CD4-positive, alpha-beta T cell (primary cell): ENCODE measurements at regions of chr9 and their contacts with region 1.

Region 1: DNA sequence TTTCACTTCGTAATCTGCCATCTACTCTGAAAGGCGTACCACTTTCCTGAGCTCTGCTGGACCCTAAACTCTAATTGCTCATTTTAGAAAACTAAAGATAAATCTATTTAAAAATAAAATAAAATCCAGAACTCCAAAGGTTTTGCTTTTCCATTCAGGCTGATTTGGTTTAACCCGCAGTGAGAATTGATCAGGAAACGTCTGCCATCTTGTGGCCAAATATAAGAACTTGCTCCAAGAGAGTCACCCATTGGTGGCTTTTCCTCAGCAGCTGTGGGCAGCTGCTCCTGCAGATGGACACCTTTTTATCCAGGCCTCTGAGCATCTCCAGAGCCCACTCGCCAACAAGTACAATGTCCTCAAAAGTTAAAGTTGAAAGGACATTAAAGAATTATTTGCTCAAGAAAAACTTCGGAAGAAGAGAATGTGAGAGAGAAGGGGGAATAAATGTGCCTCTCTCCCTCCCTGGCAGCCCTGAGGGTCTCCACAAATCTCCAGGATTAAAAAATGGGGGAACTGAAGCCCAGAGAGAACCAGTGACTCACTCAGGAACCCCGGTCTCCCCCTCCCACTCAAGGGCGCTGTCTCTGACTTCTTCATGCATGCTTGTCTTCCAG is 4.1 kb downstream of the SAXO1 start:
- DNase-seq: peak in 4 of 14 experiments; percentile 33 to 62 (median 50)
- ATAC-seq: no peak
- H3K4me3 ChIP-seq: no peak overlapping the region
- H3K4me3 Mint-ChIP-seq: no peak overlapping the region
- H3K27ac ChIP-seq: no peak overlapping the region
- H3K27ac Mint-ChIP-seq: no peak overlapping the region
- H3K4me1 ChIP-seq: no peaks in the 10 kb centered on the region
- H3K4me1 Mint-ChIP-seq: no peaks in the 10 kb centered on the region
- H3K27me3 ChIP-seq: peaks cover 0 to 6% of the 10 kb centered on the region in 2 experiments
- H3K27me3 Mint-ChIP-seq: peaks cover 10% of the 10 kb centered on the region
- CTCF ChIP-seq: peak; percentile 75

Region 2: DNA sequence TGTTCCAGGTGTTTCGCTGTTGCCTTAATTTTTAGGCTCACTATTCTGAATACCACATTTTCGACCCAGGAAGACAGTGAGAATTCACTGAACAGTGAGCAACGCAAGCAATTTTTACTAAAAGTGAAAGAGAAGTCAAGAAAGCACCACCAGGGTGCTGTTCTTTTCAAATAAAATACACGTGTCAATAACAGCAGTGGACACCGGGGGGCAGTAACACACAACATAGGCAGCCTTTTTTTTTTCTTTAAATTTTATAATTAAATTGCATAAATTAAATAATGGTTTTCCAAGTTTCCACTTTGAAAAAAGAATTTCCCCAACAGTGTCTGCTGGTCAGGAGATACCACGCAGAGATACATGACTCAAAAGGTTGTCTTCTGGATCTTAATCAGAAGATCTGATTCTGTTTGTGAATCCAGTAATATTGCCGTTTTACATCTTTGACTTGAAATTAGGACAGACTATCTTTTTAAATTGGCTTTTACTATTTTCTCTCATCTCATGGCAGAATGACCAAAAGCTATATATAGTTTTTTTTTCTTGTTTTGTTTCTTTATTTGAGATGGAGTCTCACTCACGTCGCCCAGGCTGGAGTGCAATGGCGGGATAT is 1497.2 kb before region 1 on chr9:
- CTCF ChIA-PET with region 1: no interaction called
- POLR2A ChIA-PET with region 1: no interaction called
- intact Hi-C with region 1: loop called in 1 of 2 experiments (anchors 10 kb)
- DNase-seq: no peak
- ATAC-seq: no peak
- H3K4me3 ChIP-seq: no peak overlapping the region
- H3K4me3 Mint-ChIP-seq: no peak overlapping the region
- H3K27ac ChIP-seq: no peak overlapping the region
- H3K27ac Mint-ChIP-seq: no peak overlapping the region
- H3K4me1 ChIP-seq: no peaks in the 10 kb centered on the region
- H3K4me1 Mint-ChIP-seq: no peaks in the 10 kb centered on the region
- H3K27me3 ChIP-seq: no peaks in the 10 kb centered on the region
- H3K27me3 Mint-ChIP-seq: no peaks in the 10 kb centered on the region
- CTCF ChIP-seq: no peak

Region 3: DNA sequence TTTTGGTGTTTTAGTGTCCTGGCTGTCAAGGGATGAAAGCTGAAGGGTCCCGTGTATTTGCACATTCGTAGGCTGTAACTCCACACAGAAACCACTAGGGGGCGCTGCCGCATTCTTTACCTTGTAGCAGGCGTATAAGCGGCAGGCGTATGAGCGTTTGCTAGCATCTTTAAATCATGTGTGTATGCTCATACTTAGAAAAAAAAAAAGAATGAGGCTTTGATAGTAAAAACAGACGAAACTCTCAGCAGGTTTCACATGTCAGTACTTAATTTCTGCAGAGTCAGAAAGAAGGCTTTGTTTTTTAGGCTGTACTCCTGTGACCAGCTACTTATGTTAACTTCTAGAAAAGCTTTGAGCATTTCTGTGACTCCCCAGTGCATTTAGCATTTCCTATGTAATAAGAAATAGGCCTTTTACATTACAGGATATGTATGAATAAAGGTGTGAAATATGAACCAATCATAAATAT is 773.7 kb before region 1 on chr9:
- CTCF ChIA-PET with region 1: interaction called, 4 read pairs
- POLR2A ChIA-PET with region 1: no interaction called
- intact Hi-C with region 1: loop called (anchors 2 kb)
- DNase-seq: peak; percentile 41 to 81 (median 58)
- ATAC-seq: peak; percentile 69
- H3K4me3 ChIP-seq: no peak overlapping the region
- H3K4me3 Mint-ChIP-seq: no peak overlapping the region
- H3K27ac ChIP-seq: no peak overlapping the region
- H3K27ac Mint-ChIP-seq: no peak overlapping the region
- H3K4me1 ChIP-seq: no peaks in the 10 kb centered on the region
- H3K4me1 Mint-ChIP-seq: peaks cover 7% of the 10 kb centered on the region
- H3K27me3 ChIP-seq: peaks cover 0 to 3% of the 10 kb centered on the region in 2 experiments
- H3K27me3 Mint-ChIP-seq: peaks cover 27% of the 10 kb centered on the region
- CTCF ChIP-seq: peak; percentile 99

Region 4: DNA sequence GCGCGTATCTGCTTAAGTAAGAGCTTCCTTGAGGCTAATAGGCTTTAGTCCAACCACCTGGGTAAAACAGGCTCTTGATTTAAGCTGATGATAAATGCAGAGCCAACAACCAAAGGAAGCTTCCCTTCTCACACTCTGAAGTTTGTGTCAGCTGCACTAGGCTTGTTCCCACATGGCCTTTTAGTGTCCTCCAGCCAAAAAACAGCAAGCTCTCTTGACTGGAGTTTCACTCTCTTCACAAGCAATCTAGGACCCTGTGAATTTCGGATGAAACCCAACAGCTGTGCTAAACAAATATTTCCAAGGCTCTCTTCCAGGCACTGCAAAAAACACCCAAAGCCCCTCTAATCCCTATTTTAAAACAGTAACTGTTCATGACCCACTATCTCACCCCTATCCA is 59.8 kb before region 1 on chr9:
- CTCF ChIA-PET with region 1: no interaction called
- POLR2A ChIA-PET with region 1: no interaction called
- intact Hi-C with region 1: no loop called
- DNase-seq: no peak
- ATAC-seq: no peak
- H3K4me3 ChIP-seq: no peak overlapping the region
- H3K4me3 Mint-ChIP-seq: no peak overlapping the region
- H3K27ac ChIP-seq: no peak overlapping the region
- H3K27ac Mint-ChIP-seq: no peak overlapping the region
- H3K4me1 ChIP-seq: no peaks in the 10 kb centered on the region
- H3K4me1 Mint-ChIP-seq: no peaks in the 10 kb centered on the region
- H3K27me3 ChIP-seq: peaks cover 4 to 9% of the 10 kb centered on the region in 2 experiments
- H3K27me3 Mint-ChIP-seq: peaks cover 54% of the 10 kb centered on the region
- CTCF ChIP-seq: no peak

Region 5: DNA sequence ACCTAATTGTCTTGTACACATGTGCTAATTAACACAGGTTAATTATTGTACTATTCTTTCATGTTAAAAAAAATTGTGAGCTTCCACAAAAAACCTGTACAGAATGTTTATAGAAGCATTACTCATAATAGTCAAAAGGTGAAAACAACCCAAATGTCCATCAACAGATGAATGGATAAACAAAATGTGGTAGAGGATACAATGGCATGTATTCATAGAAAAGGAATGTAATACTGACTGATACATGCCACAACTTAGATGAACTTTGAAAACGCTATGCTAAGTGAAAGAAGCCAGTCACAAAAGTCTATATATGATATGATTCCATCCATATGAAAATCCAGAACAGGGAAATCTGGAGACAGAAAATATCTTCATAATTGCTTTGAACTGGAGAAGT is 45.9 kb after region 1 on chr9:
- CTCF ChIA-PET with region 1: no interaction called
- POLR2A ChIA-PET with region 1: no interaction called
- intact Hi-C with region 1: no loop called
- DNase-seq: no peak
- ATAC-seq: no peak
- H3K4me3 ChIP-seq: no peak overlapping the region
- H3K4me3 Mint-ChIP-seq: no peak overlapping the region
- H3K27ac ChIP-seq: no peak overlapping the region
- H3K27ac Mint-ChIP-seq: no peak overlapping the region
- H3K4me1 ChIP-seq: no peaks in the 10 kb centered on the region
- H3K4me1 Mint-ChIP-seq: peaks cover 8% of the 10 kb centered on the region
- H3K27me3 ChIP-seq: no peaks in the 10 kb centered on the region
- H3K27me3 Mint-ChIP-seq: no peaks in the 10 kb centered on the region
- CTCF ChIP-seq: no peak